ENCODE measurements at regions of chr2 and their contacts with region 1.

Region 1: DNA sequence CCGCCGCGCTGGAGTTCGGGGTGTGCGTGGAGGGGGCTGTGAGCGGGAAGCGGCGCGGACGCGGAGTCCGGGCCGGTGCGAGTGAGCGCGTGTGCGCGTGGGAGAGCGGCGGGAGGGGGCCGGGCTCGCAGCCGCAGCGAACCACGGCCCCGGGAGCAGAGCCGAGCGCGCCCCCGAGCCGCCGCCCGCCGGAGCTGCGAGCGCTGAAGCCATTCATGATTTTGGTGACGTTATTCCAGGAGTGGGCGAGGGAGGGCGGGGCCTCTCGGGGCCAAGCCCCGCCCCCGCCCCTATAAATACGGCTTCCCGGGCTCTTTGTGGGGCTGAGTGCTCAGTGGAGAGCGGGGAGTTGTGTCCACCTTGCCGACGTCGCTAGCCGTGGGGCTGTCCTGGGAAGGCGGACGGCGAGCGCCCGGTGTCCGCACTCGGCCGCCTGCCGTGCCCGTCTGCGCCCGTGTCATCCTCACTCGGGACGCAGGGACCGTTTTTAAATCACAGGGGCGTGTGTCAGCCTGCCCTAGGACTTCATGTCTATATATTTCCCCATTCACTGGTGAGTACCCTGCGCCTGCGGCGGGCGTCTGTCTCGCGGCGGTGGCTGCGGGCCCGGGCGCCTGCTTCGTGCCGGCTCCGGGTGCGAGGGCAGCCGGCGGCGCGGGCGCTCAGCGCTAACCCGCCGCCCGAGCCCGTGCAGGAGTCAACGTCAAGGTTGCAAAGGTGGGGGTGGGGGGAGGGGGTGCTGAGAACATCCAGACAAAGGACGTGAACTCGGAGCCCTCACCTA is at the start of gene LBH:
- DNase-seq: peak; percentile 88
- H3K4me3 Mint-ChIP-seq: peak within 1 kb of the TSS; percentile 75
- H3K27ac Mint-ChIP-seq: peak within 1 kb of the TSS; percentile 79
- H3K4me1 Mint-ChIP-seq: peaks cover 58% of the 10 kb centered on the region
- H3K27me3 Mint-ChIP-seq: peaks cover 11% of the 10 kb centered on the region
- total RNA-seq, gene LBH: 105 to 110 TPM

Region 2: GRCh38 chr2:30146438-30147147 is 84.8 kb before region 1 on chr2 and contains the start of gene YPEL5:
- CTCF ChIA-PET with region 1: interaction called, 10 read pairs
- POLR2A ChIA-PET with region 1: interaction called, 53 read pairs
- DNase-seq: peak; percentile 99
- H3K4me3 Mint-ChIP-seq: peak within 1 kb of the TSS; percentile 81
- H3K27ac Mint-ChIP-seq: peak within 1 kb of the TSS; percentile 93
- H3K4me1 Mint-ChIP-seq: peaks cover 40% of the 10 kb centered on the region
- H3K27me3 Mint-ChIP-seq: no peaks in the 10 kb centered on the region
- total RNA-seq, gene YPEL5: 51.2 to 52.9 TPM

Region 3: GRCh38 chr2:30252723-30253701 is 21.6 kb after region 1 on chr2:
- CTCF ChIA-PET with region 1: no interaction called
- POLR2A ChIA-PET with region 1: interaction called, 41 read pairs
- DNase-seq: peak; percentile 65
- H3K4me3 Mint-ChIP-seq: peak overlapping the region; percentile 4
- H3K27ac Mint-ChIP-seq: peak overlapping the region; percentile 69
- H3K4me1 Mint-ChIP-seq: peaks cover 72% of the 10 kb centered on the region
- H3K27me3 Mint-ChIP-seq: no peaks in the 10 kb centered on the region

Region 4: DNA sequence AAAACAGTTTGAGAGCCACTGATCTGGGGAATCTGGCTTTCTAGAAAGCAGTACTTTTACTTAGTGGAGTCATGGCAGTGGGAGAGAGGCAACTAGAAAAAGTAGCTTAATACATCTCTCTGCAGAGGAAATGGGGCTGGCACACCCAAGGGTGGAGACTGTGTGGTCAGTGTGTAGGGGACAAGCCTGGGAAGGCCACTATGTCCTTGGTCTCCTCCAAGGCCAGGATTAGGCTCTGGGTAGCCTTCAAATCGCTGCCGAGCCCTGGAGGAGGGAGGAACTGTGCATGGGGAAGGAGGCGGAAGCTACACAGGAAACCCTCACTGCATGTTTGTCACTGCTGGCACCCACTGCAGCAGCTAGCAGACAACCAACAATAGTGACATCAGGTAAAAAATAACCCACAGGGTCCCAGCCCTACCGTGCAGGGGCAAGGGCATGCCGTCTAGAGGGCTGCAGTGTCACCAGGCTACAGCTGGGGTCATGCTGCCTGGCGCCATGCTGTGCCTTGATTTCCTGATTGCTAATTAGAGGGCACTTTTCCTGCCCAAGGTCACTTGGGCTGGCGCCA is 34.7 kb after region 1 on chr2:
- CTCF ChIA-PET with region 1: interaction called, 4 read pairs
- POLR2A ChIA-PET with region 1: interaction called, 138 read pairs
- DNase-seq: peak; percentile 74
- H3K4me3 Mint-ChIP-seq: peak overlapping the region; percentile 75
- H3K27ac Mint-ChIP-seq: peak overlapping the region; percentile 92
- H3K4me1 Mint-ChIP-seq: peaks cover 64% of the 10 kb centered on the region
- H3K27me3 Mint-ChIP-seq: no peaks in the 10 kb centered on the region

Region 5: DNA sequence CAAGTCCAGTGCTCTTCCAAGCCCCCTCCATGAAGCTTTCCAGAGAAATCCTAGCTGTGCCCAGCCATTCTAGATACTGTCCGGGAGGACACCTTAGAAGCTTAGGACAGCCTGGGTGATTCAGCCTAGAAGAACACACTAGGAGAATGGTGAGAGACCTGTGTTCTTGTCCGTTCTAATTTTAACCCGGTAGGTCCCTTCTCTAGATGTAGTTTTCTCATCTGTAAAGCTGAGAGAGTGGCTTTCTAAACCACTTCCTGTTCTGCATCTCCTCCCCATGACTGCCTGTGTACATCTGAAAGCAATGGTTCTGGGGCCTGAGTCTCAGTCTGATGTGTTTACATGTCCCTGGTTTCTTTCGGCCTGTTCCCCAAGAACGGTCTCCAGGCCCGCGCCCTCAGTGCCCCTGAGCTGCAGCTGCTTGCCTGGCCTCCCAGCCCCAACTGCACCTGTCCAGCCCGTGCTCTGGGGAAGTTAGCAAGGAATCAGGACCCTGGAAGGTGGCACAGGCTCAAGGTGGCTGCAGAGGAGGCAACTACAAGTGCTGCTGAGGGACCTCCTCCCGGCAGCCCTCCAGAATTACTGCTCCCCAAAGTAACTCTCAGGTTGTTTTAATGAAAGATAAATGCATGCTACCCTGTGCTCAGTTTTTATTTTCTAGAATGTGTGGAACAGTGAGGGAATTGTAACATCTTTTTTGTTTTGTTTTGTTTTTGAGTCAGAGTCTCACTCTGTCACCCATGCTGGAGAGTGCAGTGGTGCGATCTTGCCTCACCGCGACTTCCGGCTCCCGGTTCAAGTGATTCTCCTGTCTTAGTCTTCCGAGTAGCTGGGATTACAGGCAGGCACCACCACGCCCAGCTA is 105.8 kb after region 1 on chr2:
- CTCF ChIA-PET with region 1: interaction called, 5 read pairs
- POLR2A ChIA-PET with region 1: interaction called, 80 read pairs
- DNase-seq: peak; percentile 75
- H3K4me3 Mint-ChIP-seq: peak overlapping the region; percentile 72
- H3K27ac Mint-ChIP-seq: peak overlapping the region; percentile 98
- H3K4me1 Mint-ChIP-seq: peaks cover 65% of the 10 kb centered on the region
- H3K27me3 Mint-ChIP-seq: no peaks in the 10 kb centered on the region

Measured in activated CD4-positive, alpha-beta memory T cell treated with anti-CD3 and anti-CD28 coated beads, Interleukin-2, amount 10 ng/mL, durations not matched to agents 7 days and 5 days (primary cell).